ENCODE measurements at regions of chr18 and their contacts with region 1.

Region 1: DNA sequence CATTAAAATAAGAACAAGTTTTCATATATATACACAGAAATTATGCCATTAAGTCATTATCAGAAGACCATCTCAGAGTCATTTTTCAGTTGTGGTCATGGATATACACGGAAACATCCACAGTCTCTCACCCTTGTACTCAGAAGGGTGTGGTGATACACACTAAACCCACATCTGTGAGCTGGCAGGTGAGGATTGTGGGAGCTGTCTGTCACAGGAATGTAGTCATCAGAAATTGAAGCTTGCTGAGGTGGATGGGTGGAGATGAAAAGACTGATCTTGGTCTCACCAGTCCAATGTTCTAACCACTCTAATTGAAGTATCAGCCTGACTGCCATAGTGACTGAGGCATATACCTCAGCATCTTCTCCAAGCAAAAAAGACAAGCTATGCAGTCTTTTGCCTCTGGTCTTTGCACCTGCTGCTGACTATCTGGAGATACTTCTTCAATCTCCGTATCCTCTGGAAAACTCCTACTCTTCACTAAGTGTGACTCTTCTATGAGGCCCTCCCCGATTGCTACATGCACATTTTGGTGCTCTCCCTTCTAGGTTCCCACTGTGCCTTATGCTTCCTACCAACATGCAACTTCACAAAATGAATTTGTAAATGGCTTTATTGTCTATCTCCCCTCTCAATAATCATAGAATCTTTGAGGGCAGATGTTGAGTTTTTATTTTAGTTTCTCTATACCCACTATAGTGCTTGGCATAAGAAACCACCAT is 232.8 kb downstream of the DYM start:
- DNase-seq: peak; percentile 63
- H3K4me3 Mint-ChIP-seq: no peak overlapping the region
- H3K27ac Mint-ChIP-seq: no peak overlapping the region
- H3K4me1 Mint-ChIP-seq: peaks cover 23% of the 10 kb centered on the region
- H3K27me3 Mint-ChIP-seq: no peaks in the 10 kb centered on the region

Region 2: DNA sequence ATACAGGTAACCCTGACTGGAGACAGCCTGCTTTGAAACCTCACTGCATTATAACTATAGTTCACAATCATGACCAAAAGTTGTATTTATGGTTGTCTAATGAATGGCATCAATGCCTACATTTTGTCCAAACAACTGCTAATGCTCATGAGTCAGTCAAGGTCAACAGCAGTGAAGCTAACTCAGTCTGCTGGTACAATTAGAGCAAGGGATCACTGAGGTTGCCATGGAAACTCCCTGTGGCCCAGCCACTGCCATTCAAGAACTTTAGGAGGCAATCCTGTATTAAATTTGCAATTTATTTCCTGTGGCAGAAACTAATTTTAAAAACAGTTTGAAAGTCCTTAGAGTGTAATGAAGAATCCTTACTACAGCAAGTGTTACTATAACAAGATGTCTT is 91.7 kb before region 1 on chr18:
- CTCF ChIA-PET with region 1: no interaction called
- POLR2A ChIA-PET with region 1: no interaction called
- intact Hi-C with region 1: no loop called
- DNase-seq: no peak
- H3K4me3 Mint-ChIP-seq: no peak overlapping the region
- H3K27ac Mint-ChIP-seq: no peak overlapping the region
- H3K4me1 Mint-ChIP-seq: no peaks in the 10 kb centered on the region
- H3K27me3 Mint-ChIP-seq: no peaks in the 10 kb centered on the region

Region 3: GRCh38 chr18:49161627-49162026 is 66.0 kb before region 1 on chr18:
- CTCF ChIA-PET with region 1: no interaction called
- POLR2A ChIA-PET with region 1: interaction called, 4 read pairs
- intact Hi-C with region 1: loop called (anchors 1 kb)
- DNase-seq: peak; percentile 63
- H3K4me3 Mint-ChIP-seq: no peak overlapping the region
- H3K27ac Mint-ChIP-seq: no peak overlapping the region
- H3K4me1 Mint-ChIP-seq: peaks cover 11% of the 10 kb centered on the region
- H3K27me3 Mint-ChIP-seq: no peaks in the 10 kb centered on the region

Region 4: GRCh38 chr18:49849331-49850217 is 622.0 kb after region 1 on chr18:
- CTCF ChIA-PET with region 1: no interaction called
- POLR2A ChIA-PET with region 1: no interaction called
- intact Hi-C with region 1: no loop called
- DNase-seq: no peak
- H3K4me3 Mint-ChIP-seq: no peak overlapping the region
- H3K27ac Mint-ChIP-seq: no peak overlapping the region
- H3K4me1 Mint-ChIP-seq: no peaks in the 10 kb centered on the region
- H3K27me3 Mint-ChIP-seq: peaks cover 15% of the 10 kb centered on the region

Measured in activated CD4-positive, alpha-beta memory T cell treated with anti-CD3 and anti-CD28 coated beads for 36 hours (primary cell).